A673 (cell line): ENCODE measurements at regions of chr1 and their contacts with region 1.

Region 1: GRCh38 chr1:163701783-163702374 is 380.1 kb downstream of the NUF2 start:
- DNase-seq: no peak
- H3K4me3 ChIP-seq: no peak overlapping the region
- H3K27ac ChIP-seq: peak overlapping the region; percentile 6
- H3K4me1 ChIP-seq: peaks cover 36% of the 10 kb centered on the region
- H3K27me3 ChIP-seq: no peaks in the 10 kb centered on the region
- CTCF ChIP-seq: 0 out of 2 replicates have a peak, but pooled peaks have one; percentile 22

Region 2: DNA sequence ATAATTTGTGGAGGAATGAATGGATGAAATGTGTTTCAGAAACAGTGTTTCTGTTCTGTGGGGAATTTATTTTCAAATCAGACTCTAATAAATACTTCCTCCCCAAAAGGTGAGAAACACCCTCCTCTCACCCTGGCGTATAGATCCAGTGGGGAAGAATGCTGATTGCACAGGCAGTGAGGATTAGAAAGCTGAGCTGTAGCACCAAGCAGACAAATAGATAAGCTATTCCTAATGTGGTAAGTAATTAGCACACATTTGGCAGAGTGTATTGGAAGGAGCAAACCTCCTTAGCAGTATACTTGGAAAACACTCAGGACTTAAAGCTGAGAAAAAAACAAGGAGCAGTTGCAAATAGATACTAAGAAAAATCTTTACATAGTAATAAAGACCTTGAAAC is 329.3 kb before region 1 on chr1:
- CTCF ChIA-PET with region 1: no interaction called
- POLR2A ChIA-PET with region 1: no interaction called
- intact Hi-C with region 1: loop called (anchors 10 kb)
- DNase-seq: no peak
- H3K4me3 ChIP-seq: no peak overlapping the region
- H3K27ac ChIP-seq: no peak overlapping the region
- H3K4me1 ChIP-seq: peaks cover 13% of the 10 kb centered on the region
- H3K27me3 ChIP-seq: no peaks in the 10 kb centered on the region
- CTCF ChIP-seq: no peak